ENCODE measurements at regions of chr2 and their contacts with region 1.

Region 1: GRCh38 chr2:45681675-45682074 is 30.2 kb downstream of the PRKCE start:
- DNase-seq: peak in 1 of 2 donors; percentile 48
- ATAC-seq: peak; percentile 94 to 98 (median 97)
- H3K4me3 ChIP-seq: no peak overlapping the region
- H3K27ac ChIP-seq: peak overlapping the region; percentile 80
- H3K4me1 ChIP-seq: peaks cover 37% of the 10 kb centered on the region
- H3K27me3 ChIP-seq: no peaks in the 10 kb centered on the region
- CTCF ChIP-seq: no peak

Region 2: GRCh38 chr2:44833171-44834069 is 848.3 kb before region 1 on chr2:
- intact Hi-C with region 1: no loop called
- DNase-seq: no peak
- ATAC-seq: no peak
- H3K4me3 ChIP-seq: no peak overlapping the region
- H3K27ac ChIP-seq: no peak overlapping the region
- H3K4me1 ChIP-seq: no peaks in the 10 kb centered on the region
- H3K27me3 ChIP-seq: peaks cover 0 to 2% (median 0%) of the 10 kb centered on the region in 3 donors
- CTCF ChIP-seq: no peak

Region 3: GRCh38 chr2:45706033-45706432 is 24.4 kb after region 1 on chr2:
- intact Hi-C with region 1: loop called in 1 of 2 experiments (anchors 2 kb)
- DNase-seq: no peak
- ATAC-seq: peak in 1 of 4 donors; percentile 21
- H3K4me3 ChIP-seq: no peak overlapping the region
- H3K27ac ChIP-seq: peak overlapping the region; percentile 20
- H3K4me1 ChIP-seq: peaks cover 37% of the 10 kb centered on the region
- H3K27me3 ChIP-seq: no peaks in the 10 kb centered on the region
- CTCF ChIP-seq: no peak

Measured in psoas muscle (tissue), 8 donors.